ENCODE measurements at regions of chr9 and their contacts with region 1.

Region 1: GRCh38 chr9:93003552-93004407 is 54.7 kb upstream of the SUSD3 start:
- DNase-seq: peak; percentile 68
- H3K4me3 Mint-ChIP-seq: no peak overlapping the region
- H3K27ac Mint-ChIP-seq: peak overlapping the region; percentile 78
- H3K4me1 Mint-ChIP-seq: peaks cover 46% of the 10 kb centered on the region
- H3K27me3 Mint-ChIP-seq: no peaks in the 10 kb centered on the region

Region 2: GRCh38 chr9:92954049-92954861 is 49.5 kb before region 1 on chr9:
- CTCF ChIA-PET with region 1: interaction called, 22 read pairs
- POLR2A ChIA-PET with region 1: interaction called, 3 read pairs
- DNase-seq: peak; percentile 88
- H3K4me3 Mint-ChIP-seq: peak overlapping the region; percentile 63
- H3K27ac Mint-ChIP-seq: peak overlapping the region; percentile 91
- H3K4me1 Mint-ChIP-seq: peaks cover 71% of the 10 kb centered on the region
- H3K27me3 Mint-ChIP-seq: no peaks in the 10 kb centered on the region

Region 3: GRCh38 chr9:92986176-92987085 is 17.3 kb before region 1 on chr9:
- CTCF ChIA-PET with region 1: interaction called, 27 read pairs
- POLR2A ChIA-PET with region 1: interaction called, 3 read pairs
- DNase-seq: peak; percentile 47
- H3K4me3 Mint-ChIP-seq: no peak overlapping the region
- H3K27ac Mint-ChIP-seq: peak overlapping the region; percentile 48
- H3K4me1 Mint-ChIP-seq: peaks cover 66% of the 10 kb centered on the region
- H3K27me3 Mint-ChIP-seq: no peaks in the 10 kb centered on the region

Region 4: DNA sequence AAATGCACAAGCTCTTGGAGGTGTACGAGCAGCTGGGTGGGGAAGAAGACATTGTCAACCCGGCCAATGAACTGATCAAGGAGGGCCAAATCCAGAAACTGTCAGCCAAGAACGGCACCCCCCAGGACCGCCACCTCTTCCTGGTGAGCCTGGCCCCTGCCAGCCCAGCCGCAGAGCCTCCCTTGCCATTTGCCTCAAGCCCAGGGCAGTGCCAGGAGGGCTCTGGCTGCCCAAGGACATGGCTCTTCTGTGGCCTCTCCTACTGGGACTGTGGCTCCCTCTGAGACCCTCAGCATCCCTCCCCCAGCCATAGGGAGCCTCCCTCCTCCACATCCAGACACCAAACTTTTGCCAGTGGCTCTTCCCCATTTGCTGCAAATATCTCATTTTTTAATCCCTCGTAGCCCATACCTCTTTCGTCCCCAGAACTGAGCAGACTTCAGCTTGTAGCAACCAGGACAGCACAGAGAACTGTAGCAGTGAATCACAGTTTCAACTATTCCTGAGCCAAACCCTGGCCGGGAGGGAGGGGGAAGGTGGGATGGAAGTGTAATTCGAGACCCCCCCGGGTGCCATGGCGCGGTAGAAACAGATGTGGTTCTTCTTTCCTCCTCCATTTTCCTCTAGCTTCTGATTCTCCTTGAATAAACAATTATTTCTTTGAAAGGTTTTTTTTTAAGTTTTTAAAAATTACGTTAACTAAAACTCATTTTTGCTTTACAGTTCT is 10.2 kb after region 1 on chr9:
- CTCF ChIA-PET with region 1: interaction called, 16 read pairs
- POLR2A ChIA-PET with region 1: interaction called, 3 read pairs
- DNase-seq: peak; percentile 4
- H3K4me3 Mint-ChIP-seq: no peak overlapping the region
- H3K27ac Mint-ChIP-seq: peak overlapping the region; percentile 9
- H3K4me1 Mint-ChIP-seq: peaks cover 2% of the 10 kb centered on the region
- H3K27me3 Mint-ChIP-seq: no peaks in the 10 kb centered on the region